Activated T-helper 2 cell treated with anti-CD3 and anti-CD28 coated beads, Interferon-gamma antibody, Interleukin-2, Interleukin-4, amounts not matched to agents 10 μg/mL and 5 μg/mL and 100 μg/mL, durations not matched to agents 14 hours and 24 hours and 36 hours (primary cell): ENCODE measurements at regions of chr12 and their contacts with region 1.

Region 1: GRCh38 chr12:9647825-9648700 is 21.4 kb upstream of the CLEC2D start:
- DNase-seq: peak; percentile 95
- H3K4me3 Mint-ChIP-seq: peak overlapping the region; percentile 94
- H3K27ac Mint-ChIP-seq: peak overlapping the region; percentile 96
- H3K4me1 Mint-ChIP-seq: peaks cover 46% of the 10 kb centered on the region
- H3K27me3 Mint-ChIP-seq: no peaks in the 10 kb centered on the region

Region 2: DNA sequence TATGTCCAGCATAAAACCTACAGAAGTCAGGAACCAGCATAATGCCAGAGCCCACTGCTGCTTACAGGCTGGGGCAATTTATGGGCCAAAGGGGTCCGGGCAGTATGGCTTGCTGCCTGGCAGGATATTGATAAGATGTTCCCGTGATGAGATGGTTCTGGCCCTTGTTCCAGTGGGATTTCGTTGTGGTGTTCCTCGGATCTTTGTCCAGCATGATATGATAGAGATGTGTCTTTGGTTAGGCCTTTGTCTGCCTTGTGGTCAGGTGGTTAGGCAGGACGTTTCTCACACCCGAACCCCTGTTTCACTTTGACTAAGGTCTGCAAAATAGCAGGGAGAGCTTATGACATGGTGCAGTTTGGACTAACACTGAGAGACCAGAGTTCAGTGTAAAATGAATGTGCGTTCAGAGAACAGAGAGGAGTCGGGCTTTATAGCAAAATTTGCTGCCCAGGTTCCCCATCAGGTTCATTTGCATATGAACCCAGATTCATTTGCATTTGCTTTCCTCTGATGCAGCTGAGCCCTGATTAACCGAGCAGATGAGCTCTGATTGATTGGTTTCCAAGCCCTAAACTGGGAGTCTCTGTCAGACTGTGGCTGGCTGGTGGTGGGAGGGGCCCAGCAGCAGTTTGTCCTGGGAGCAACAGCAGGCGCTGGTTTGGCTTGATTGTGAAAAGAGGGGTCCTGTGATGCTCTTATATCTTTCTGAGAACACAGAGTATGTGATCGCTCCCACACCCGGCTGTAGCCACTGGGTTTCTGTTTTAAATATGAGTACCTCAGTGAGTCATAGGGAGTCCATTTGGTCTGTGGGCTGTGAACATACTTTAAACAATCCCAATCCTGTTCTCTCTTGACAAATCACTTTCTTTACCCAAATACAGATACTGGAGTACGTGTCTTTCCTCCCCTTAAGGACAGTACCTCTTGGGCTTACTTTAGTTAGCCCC is 283.6 kb before region 1 on chr12:
- intact Hi-C with region 1: loop called (anchors 2 kb)
- DNase-seq: peak; percentile 43
- H3K4me3 Mint-ChIP-seq: peak overlapping the region; percentile 49
- H3K27ac Mint-ChIP-seq: peak overlapping the region; percentile 86
- H3K4me1 Mint-ChIP-seq: peaks cover 47% of the 10 kb centered on the region
- H3K27me3 Mint-ChIP-seq: peaks cover 51% of the 10 kb centered on the region

Region 3: DNA sequence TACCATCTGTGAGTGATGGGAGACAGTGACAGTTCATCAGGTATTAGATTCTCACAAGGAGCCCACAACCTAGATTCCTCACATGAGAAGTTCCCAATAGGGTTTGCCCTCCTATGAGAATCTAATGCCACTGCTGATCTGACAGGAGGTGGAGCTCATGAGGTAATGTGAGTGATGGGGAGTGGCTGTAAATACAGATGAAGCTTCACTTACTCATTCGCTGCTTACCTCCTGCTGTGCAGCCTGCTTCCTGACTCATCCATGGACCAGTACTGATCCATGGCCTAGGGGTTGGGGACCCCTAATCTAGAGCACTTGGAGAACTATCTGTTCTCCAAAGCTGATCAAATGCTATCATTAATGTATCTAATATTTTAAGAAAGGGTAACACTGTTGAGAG is 39.2 kb after region 1 on chr12:
- intact Hi-C with region 1: loop called (anchors 5 kb)
- DNase-seq: no peak
- H3K4me3 Mint-ChIP-seq: no peak overlapping the region
- H3K27ac Mint-ChIP-seq: peak overlapping the region; percentile 60
- H3K4me1 Mint-ChIP-seq: peaks cover 55% of the 10 kb centered on the region
- H3K27me3 Mint-ChIP-seq: no peaks in the 10 kb centered on the region

Region 4: GRCh38 chr12:9760699-9761418 is 112.8 kb after region 1 on chr12 and contains the start of gene CD69:
- intact Hi-C with region 1: loop called (anchors 1 kb)
- DNase-seq: peak; percentile 83
- H3K4me3 Mint-ChIP-seq: peak within 1 kb of the TSS; percentile 99
- H3K27ac Mint-ChIP-seq: peak within 1 kb of the TSS; percentile 96
- H3K4me1 Mint-ChIP-seq: peaks cover 48% of the 10 kb centered on the region
- H3K27me3 Mint-ChIP-seq: no peaks in the 10 kb centered on the region
- total RNA-seq, gene CD69: 70.9 and 72.2 TPM in 2 replicates